ENCODE measurements at regions of chr6 and their contacts with region 1.

Region 1: GRCh38 chr6:42028234-42029061 is 21.9 kb upstream of the TAF8 start:
- DNase-seq: no peak
- H3K4me3 ChIP-seq: no peak overlapping the region
- H3K27ac ChIP-seq: no peak overlapping the region
- H3K4me1 ChIP-seq: peaks cover 22 to 43% (median 27%) of the 10 kb centered on the region in 4 donors
- H3K27me3 ChIP-seq: no peaks in the 10 kb centered on the region
- CTCF ChIP-seq: no peak
- EP300 ChIP-seq: no peak
- POLR2A ChIP-seq: no peak

Region 2: DNA sequence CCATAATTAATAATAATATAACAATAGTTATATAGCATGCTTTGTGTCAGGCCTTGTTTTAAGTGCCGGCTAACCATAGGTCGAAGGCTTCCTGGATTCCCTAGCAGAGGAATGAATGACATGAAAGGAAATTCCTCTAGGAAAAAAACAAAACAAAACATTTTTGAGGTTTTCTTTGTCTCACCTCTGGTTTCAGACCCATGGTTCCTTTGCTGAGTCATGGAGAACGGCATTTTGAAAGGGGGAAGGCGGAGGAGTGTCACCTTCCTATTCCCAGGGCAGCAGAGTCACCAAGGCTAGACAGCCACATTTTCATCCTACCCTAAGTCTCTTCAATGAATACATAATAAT is 61.5 kb before region 1 on chr6:
- intact Hi-C with region 1: loop called (anchors 10 kb)
- DNase-seq: no peak
- H3K4me3 ChIP-seq: no peak overlapping the region
- H3K27ac ChIP-seq: no peak overlapping the region
- H3K4me1 ChIP-seq: peaks cover 7 to 15% (median 11%) of the 10 kb centered on the region in 4 donors
- H3K27me3 ChIP-seq: no peaks in the 10 kb centered on the region
- CTCF ChIP-seq: no peak
- EP300 ChIP-seq: no peak
- POLR2A ChIP-seq: no peak

Region 3: DNA sequence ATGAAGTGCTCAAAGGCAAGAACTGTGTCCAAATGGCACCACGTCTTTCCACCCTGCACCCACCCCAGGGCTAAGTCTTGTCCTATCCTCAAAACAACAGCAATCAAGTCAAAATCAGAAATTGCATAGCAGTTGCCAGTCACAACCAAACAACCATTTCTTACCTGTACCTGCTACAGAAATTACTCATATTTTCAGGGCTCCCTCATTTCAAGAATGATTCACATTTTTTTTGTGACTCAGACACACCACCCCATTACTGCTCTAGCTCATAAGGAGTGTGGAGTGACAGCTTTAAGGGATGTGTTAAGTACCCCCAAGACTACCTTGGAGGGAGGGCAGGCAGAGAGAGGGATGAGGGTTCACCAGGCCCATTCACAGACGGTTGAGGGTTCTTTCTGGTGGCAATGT is 311.5 kb after region 1 on chr6:
- intact Hi-C with region 1: no loop called
- DNase-seq: no peak
- H3K4me3 ChIP-seq: no peak overlapping the region
- H3K27ac ChIP-seq: no peak overlapping the region
- H3K4me1 ChIP-seq: peaks cover 0 to 6% (median 3%) of the 10 kb centered on the region in 4 donors
- H3K27me3 ChIP-seq: no peaks in the 10 kb centered on the region
- CTCF ChIP-seq: no peak
- EP300 ChIP-seq: no peak
- POLR2A ChIP-seq: no peak